Aorta (tissue), 5 donors: ENCODE measurements at regions of chr18 and their contacts with region 1.

Region 1: DNA sequence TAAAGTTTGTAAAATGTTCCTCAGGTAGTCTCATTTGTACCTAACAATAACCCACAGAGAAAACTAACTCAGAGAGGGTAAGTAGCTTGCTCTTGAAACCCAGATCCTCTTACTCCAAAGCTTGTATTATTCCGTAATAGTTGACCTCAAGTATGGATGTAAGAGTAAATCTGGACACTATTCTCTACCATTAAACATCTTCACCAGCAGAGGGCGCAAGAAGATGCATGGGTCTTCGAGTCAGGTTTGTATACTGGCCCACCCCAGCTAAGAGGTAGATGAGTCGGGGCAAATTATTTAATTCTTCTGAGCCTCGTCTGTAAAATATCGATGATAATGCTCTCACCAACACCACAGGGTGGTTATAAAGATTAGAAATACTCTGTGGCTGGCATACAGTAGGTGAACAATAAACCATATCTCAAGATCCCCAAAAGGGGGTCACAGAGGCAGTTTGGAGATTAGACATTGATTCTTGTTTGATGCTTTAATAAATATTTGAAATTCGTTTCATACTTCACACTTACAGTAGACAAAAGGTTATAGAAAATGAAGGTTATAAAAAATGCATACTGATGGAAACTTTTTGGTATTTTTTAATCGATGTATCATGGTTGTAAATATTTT is 3.5 kb upstream of the CABLES1 start:
- DNase-seq: no peak
- ATAC-seq: peak; percentile 71
- H3K4me3 ChIP-seq: no peak overlapping the region
- H3K27ac ChIP-seq: no peak overlapping the region
- H3K4me1 ChIP-seq: peaks cover 0 to 3% of the 10 kb centered on the region in 2 donors
- H3K27me3 ChIP-seq: no peaks in the 10 kb centered on the region

Region 2: GRCh38 chr18:23032030-23032582 is 99.7 kb before region 1 on chr18:
- intact Hi-C with region 1: loop called in 1 of 2 experiments (anchors 5 kb)
- DNase-seq: no peak
- ATAC-seq: no peak
- H3K4me3 ChIP-seq: no peak overlapping the region
- H3K27ac ChIP-seq: no peak overlapping the region
- H3K4me1 ChIP-seq: peaks cover 0 to 2% of the 10 kb centered on the region in 2 donors
- H3K27me3 ChIP-seq: no peaks in the 10 kb centered on the region

Region 3: GRCh38 chr18:23231340-23232021 is 99.7 kb after region 1 on chr18:
- intact Hi-C with region 1: loop called in 1 of 2 experiments (anchors 5 kb)
- DNase-seq: peak; percentile 86 to 89
- ATAC-seq: peak; percentile 90
- H3K4me3 ChIP-seq: no peak overlapping the region
- H3K27ac ChIP-seq: peak overlapping the region; percentile 88 to 99
- H3K4me1 ChIP-seq: peaks cover 3% of the 10 kb centered on the region in 2 donors
- H3K27me3 ChIP-seq: no peaks in the 10 kb centered on the region

Region 4: GRCh38 chr18:23356915-23357601 is 225.3 kb after region 1 on chr18:
- intact Hi-C with region 1: loop called (anchors 2 to 5 kb)
- DNase-seq: no peak
- ATAC-seq: peak; percentile 65
- H3K4me3 ChIP-seq: no peak overlapping the region
- H3K27ac ChIP-seq: peak overlapping the region; percentile 10 to 99
- H3K4me1 ChIP-seq: peaks cover 10 to 11% of the 10 kb centered on the region in 2 donors
- H3K27me3 ChIP-seq: no peaks in the 10 kb centered on the region

Region 5: DNA sequence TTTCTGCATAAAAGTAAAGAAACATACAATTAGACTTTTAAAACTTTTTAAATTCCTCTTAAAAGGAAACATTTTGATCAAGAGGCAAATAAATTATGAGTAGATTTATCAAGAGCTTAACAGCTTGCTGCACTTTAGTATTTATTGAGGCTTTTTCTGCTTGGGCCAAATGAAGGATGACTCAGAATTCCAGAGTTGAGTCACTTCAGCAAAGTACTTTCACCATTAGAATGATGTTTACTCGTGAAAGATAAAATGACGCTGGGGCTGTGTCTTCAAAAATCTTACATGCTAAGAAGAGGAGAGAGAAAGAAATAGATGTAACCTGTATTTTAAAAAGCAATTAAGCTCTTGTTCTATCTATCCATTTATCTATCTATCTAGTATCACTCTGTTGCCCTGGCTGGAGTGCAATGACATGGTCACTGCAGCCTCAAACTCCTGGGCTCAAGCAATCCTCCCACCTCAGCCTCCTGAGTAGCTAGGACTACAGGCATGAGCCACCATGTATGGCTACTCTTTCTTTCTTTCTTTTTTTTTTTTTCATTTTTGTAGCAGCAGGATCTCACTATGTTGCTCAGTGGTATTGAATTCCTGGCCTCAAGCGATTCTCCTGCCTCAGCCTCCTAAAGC is 246.0 kb after region 1 on chr18:
- intact Hi-C with region 1: loop called (anchors 5 kb)
- DNase-seq: no peak
- ATAC-seq: peak; percentile 84
- H3K4me3 ChIP-seq: no peak overlapping the region
- H3K27ac ChIP-seq: peak overlapping the region in 1 of 2 donors; percentile 76
- H3K4me1 ChIP-seq: peaks cover 0 to 4% of the 10 kb centered on the region in 2 donors
- H3K27me3 ChIP-seq: no peaks in the 10 kb centered on the region

Region 6: DNA sequence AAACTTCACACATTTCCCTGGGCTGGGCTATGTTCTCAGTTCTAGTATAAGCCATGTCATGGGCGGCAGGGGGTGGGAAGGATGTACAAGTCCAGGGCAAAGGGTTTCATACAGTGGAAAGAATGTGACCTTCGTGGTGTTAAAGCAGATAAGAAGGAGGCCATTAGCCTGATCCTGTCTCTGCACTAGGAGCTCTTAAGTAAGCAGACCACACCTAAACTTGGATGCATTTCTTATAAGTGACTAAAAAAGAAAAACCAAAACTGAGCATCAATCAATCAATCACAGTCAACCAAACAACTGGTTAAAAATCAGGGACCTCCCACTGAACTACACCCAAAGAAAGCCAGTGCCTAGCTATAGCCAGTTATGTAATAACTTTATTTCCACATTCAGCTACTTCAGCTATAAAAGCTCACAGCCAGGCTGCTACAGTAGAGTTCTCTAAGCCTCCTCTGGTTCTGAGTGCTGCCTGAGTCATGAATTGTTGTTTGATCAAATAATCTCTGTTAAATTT is 274.5 kb after region 1 on chr18:
- intact Hi-C with region 1: loop called (anchors 1 to 5 kb)
- DNase-seq: no peak
- ATAC-seq: no peak
- H3K4me3 ChIP-seq: no peak overlapping the region
- H3K27ac ChIP-seq: no peak overlapping the region
- H3K4me1 ChIP-seq: no peaks in the 10 kb centered on the region
- H3K27me3 ChIP-seq: no peaks in the 10 kb centered on the region

Region 7: DNA sequence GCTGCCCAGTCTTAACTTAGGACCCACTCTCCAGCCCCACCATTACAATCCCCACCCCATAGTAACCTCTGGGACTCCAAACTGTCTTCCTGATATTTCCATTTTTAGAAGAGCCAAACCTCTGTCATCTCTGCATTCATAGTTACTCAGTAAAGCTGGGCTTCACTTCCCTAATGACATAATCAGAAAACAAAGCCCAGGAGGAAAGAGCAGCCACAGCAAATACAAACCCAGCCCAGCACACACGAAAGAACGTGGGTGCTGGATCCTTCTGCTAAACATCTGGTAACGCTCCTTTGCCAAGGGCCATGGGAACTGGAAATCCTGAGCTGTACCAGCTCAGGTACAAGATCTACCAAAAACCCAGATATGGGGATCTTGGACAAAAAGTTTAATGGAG is 284.5 kb after region 1 on chr18:
- intact Hi-C with region 1: loop called (anchors 1 to 5 kb)
- DNase-seq: no peak
- ATAC-seq: no peak
- H3K4me3 ChIP-seq: no peak overlapping the region
- H3K27ac ChIP-seq: no peak overlapping the region
- H3K4me1 ChIP-seq: peaks cover 0 to 3% of the 10 kb centered on the region in 2 donors
- H3K27me3 ChIP-seq: no peaks in the 10 kb centered on the region